Psoas muscle (tissue), 8 donors: ENCODE measurements at regions of chr9 and their contacts with region 1.

Region 1: DNA sequence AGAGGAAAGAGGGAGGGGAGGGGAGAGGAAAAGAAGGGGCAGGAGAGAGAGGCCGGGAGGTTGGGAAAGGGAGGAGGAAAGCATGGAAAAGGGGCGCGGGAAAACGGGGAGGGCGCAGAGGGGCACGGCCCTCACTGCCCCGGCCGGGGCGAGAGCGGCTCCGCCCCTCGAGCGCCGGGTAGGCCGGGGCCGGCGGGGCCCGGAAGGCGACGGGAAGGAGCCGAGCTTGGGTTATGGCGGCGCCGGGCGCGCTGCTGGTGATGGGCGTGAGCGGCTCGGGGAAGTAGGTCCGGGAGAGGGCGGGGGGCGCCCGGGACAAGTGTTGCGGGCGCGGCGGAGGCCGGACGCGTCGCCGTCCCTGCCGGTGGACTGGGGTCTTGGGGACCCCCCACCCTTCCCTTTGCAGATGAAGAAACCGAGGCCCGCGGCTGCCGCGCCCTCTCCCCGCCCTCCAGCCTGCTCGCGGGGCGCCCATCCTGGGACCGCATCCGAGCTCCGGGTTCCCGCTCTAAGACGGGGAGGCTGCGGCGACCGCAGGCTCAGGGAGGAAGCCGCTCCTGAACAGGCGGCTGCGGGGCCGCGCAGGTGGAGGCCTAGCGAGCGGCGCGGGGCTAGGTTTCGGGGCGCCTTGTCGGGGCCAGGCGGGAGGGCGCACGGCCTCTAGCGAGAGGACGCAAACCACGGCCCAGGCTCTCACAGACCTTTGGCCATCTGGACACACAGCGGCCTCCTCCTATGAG is at the start of gene IDNK:
- DNase-seq: peak; percentile 67 to 77
- ATAC-seq: peak; percentile 71 to 77 (median 75)
- H3K4me3 ChIP-seq: peak within 1 kb of the TSS; percentile 88
- H3K27ac ChIP-seq: peak within 1 kb of the TSS; percentile 67
- H3K4me1 ChIP-seq: no peaks in the 10 kb centered on the region
- H3K27me3 ChIP-seq: no peaks in the 10 kb centered on the region
- CTCF ChIP-seq: no peak
- total RNA-seq, gene IDNK: 1.0 to 1.8 (median 1.2) TPM

Region 2: GRCh38 chr9:83247732-83248131 is 375.4 kb before region 1 on chr9:
- intact Hi-C with region 1: no loop called
- DNase-seq: no peak
- ATAC-seq: no peak
- H3K4me3 ChIP-seq: no peak overlapping the region
- H3K27ac ChIP-seq: no peak overlapping the region
- H3K4me1 ChIP-seq: peaks cover 8% of the 10 kb centered on the region
- H3K27me3 ChIP-seq: no peaks in the 10 kb centered on the region
- CTCF ChIP-seq: no peak

Region 3: GRCh38 chr9:83707768-83708514 is 84.8 kb after region 1 on chr9 and contains the start of gene UBQLN1:
- intact Hi-C with region 1: loop called in 1 of 2 experiments (anchors 5 kb)
- DNase-seq: peak; percentile 94 to 96
- ATAC-seq: peak; percentile 88 to 89 (median 89)
- H3K4me3 ChIP-seq: peak within 1 kb of the TSS; percentile 97
- H3K27ac ChIP-seq: peak within 1 kb of the TSS; percentile 100
- H3K4me1 ChIP-seq: peaks cover 27% of the 10 kb centered on the region
- H3K27me3 ChIP-seq: no peaks in the 10 kb centered on the region
- CTCF ChIP-seq: peak; percentile 2
- total RNA-seq, gene UBQLN1: 105 to 212 (median 156) TPM

Region 4: GRCh38 chr9:83920927-83921707 is 298.0 kb after region 1 on chr9 and contains the start of gene KIF27:
- intact Hi-C with region 1: loop called in 1 of 2 experiments (anchors 10 kb)
- DNase-seq: peak; percentile 100
- ATAC-seq: peak; percentile 97 to 98 (median 98)
- H3K4me3 ChIP-seq: peak within 1 kb of the TSS; percentile 84
- H3K27ac ChIP-seq: peak within 1 kb of the TSS; percentile 88
- H3K4me1 ChIP-seq: peaks cover 6% of the 10 kb centered on the region
- H3K27me3 ChIP-seq: no peaks in the 10 kb centered on the region
- CTCF ChIP-seq: peak; percentile 41
- total RNA-seq, gene KIF27: 1.8 to 3.8 (median 2.7) TPM